ENCODE measurements at regions of chr13 and their contacts with region 1.

Region 1: DNA sequence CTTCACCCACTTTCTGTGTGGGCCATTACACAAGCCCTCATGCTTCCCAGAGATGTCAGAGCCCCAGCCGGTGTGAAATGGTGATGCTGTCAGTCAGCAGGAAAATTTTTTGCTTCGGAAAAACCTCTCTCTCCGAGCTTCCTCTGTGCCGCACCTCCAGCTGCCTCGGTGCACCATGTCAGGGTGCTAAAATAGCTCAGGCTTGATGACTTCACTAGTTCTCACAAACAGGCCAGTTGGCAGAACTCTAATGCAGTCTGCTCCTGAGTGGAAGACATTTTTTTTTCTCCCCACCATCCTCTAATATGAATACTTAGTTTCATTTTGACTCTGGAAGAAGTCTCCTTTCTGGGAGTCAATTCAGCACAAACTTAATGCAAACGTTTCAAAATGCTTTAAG is 71.3 kb downstream of the KLF12 start:
- DNase-seq: peak; percentile 80
- H3K4me3 ChIP-seq: peak overlapping the region; percentile 60
- H3K27ac ChIP-seq: peak overlapping the region; percentile 84
- H3K4me1 ChIP-seq: peaks cover 54% of the 10 kb centered on the region
- CTCF ChIP-seq: no peak

Region 2: GRCh38 chr13:73967397-73968165 is 95.4 kb before region 1 on chr13:
- CTCF ChIA-PET with region 1: no interaction called
- POLR2A ChIA-PET with region 1: interaction called, 10 read pairs
- intact Hi-C with region 1: loop called (anchors 2 kb)
- DNase-seq: peak; percentile 91
- H3K4me3 ChIP-seq: peak overlapping the region; percentile 61
- H3K27ac ChIP-seq: peak overlapping the region; percentile 99
- H3K4me1 ChIP-seq: peaks cover 76% of the 10 kb centered on the region
- CTCF ChIP-seq: no peak

Region 3: DNA sequence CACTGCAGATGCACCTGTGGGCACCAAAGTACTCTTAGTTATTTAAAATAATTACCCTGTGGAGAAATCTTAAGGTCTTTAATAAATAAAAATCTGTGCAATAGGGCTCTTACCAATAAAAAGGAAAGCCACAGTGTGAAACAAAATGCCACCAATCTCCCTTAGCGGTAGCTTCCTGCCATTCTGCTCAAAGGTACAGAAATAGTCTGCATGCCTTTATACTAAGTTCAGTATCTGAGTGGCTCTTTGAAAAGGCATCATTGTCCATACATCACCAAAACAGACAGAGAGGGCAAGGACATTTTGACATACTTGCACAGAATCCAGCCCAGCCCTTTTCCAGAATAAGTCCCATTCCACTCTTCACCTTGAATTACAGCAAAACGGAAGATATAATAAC is 89.8 kb before region 1 on chr13:
- CTCF ChIA-PET with region 1: no interaction called
- POLR2A ChIA-PET with region 1: interaction called, 12 read pairs
- intact Hi-C with region 1: no loop called
- DNase-seq: peak; percentile 73
- H3K4me3 ChIP-seq: peak overlapping the region; percentile 68
- H3K27ac ChIP-seq: peak overlapping the region; percentile 99
- H3K4me1 ChIP-seq: peaks cover 96% of the 10 kb centered on the region
- CTCF ChIP-seq: no peak

Region 4: GRCh38 chr13:73991884-73992283 is 71.0 kb before region 1 on chr13:
- CTCF ChIA-PET with region 1: no interaction called
- POLR2A ChIA-PET with region 1: interaction called, 8 read pairs
- intact Hi-C with region 1: loop called (anchors 5 kb)
- DNase-seq: peak; percentile 84
- H3K4me3 ChIP-seq: peak overlapping the region; percentile 56
- H3K27ac ChIP-seq: peak overlapping the region; percentile 99
- H3K4me1 ChIP-seq: peaks cover 98% of the 10 kb centered on the region
- CTCF ChIP-seq: no peak

Region 5: GRCh38 chr13:74026753-74027152 is 36.2 kb before region 1 on chr13:
- CTCF ChIA-PET with region 1: no interaction called
- POLR2A ChIA-PET with region 1: interaction called, 5 read pairs
- intact Hi-C with region 1: loop called (anchors 2 kb)
- DNase-seq: peak; percentile 82
- H3K4me3 ChIP-seq: peak overlapping the region; percentile 56
- H3K27ac ChIP-seq: peak overlapping the region; percentile 83
- H3K4me1 ChIP-seq: peaks cover 48% of the 10 kb centered on the region
- CTCF ChIP-seq: no peak

Region 6: GRCh38 chr13:74040200-74040599 is 22.7 kb before region 1 on chr13:
- CTCF ChIA-PET with region 1: no interaction called
- POLR2A ChIA-PET with region 1: interaction called, 10 read pairs
- intact Hi-C with region 1: no loop called
- DNase-seq: peak; percentile 79
- H3K4me3 ChIP-seq: no peak overlapping the region
- H3K27ac ChIP-seq: no peak overlapping the region
- H3K4me1 ChIP-seq: peaks cover 24% of the 10 kb centered on the region
- CTCF ChIP-seq: peak; percentile 92